B cell (primary cell): ENCODE measurements at regions of chr15 and their contacts with region 1.

Region 1: DNA sequence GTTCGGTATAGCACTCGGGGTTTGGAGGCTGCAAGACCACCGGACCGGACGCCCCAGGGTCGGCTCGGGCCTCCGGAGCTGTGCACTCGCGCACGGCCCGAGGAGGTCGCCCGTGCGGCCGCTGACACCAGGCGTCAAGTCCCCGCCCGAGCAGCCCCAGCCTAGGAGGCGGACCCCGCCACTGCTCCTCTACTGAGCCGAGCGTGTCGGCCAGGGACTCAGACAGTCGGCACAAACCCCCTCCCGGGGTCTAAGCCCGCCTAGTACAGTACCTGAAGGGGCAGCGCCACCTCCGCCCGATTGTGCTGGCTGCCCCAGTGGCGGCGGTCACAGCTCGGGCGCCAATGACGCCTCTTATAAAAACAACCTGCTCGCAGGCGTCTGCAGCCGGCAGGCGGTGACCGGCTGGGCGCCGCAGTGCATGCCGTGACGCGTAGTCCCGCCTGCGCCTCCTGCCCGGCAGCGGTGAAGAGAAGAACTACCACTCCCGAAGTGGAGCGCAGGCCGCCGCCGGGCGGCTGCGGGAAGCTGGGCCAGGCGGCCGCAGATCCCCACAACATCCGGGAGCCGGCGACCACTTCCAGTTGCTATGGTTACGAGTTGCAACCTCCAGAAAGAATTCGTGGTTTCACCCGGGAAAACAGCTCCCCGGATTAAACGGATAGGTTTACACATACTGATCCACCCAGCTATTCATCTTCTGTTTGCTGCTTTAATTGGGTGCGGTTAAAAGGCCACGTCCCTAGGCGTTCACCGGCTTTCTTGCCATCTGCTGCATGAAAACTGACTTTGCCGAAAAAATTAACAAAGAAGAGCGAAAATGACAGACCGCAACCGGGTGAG is at the starts of genes CCPG1 and PIERCE2:
- DNase-seq: peak; percentile 93
- ATAC-seq: peak; percentile 94
- H3K4me3 ChIP-seq: peak within 1 kb of the TSS; percentile 73 to 90 (median 77)
- H3K4me3 Mint-ChIP-seq: peak within 1 kb of the TSS; percentile 96
- H3K27ac ChIP-seq: peak within 1 kb of the TSS; percentile 90 to 94
- H3K27ac Mint-ChIP-seq: peak within 1 kb of the TSS; percentile 92
- H3K4me1 ChIP-seq: peaks cover 19 to 24% of the 10 kb centered on the region in 2 donors
- H3K4me1 Mint-ChIP-seq: peaks cover 27% of the 10 kb centered on the region
- H3K27me3 ChIP-seq: no peaks in the 10 kb centered on the region
- H3K27me3 Mint-ChIP-seq: no peaks in the 10 kb centered on the region
- CTCF ChIP-seq: peak; percentile 92
- total RNA-seq, gene CCPG1: 32.1 and 36.0 TPM in 2 replicates
- total RNA-seq, gene PIERCE2: 1.2 and 1.8 TPM in 2 replicates

Region 2: DNA sequence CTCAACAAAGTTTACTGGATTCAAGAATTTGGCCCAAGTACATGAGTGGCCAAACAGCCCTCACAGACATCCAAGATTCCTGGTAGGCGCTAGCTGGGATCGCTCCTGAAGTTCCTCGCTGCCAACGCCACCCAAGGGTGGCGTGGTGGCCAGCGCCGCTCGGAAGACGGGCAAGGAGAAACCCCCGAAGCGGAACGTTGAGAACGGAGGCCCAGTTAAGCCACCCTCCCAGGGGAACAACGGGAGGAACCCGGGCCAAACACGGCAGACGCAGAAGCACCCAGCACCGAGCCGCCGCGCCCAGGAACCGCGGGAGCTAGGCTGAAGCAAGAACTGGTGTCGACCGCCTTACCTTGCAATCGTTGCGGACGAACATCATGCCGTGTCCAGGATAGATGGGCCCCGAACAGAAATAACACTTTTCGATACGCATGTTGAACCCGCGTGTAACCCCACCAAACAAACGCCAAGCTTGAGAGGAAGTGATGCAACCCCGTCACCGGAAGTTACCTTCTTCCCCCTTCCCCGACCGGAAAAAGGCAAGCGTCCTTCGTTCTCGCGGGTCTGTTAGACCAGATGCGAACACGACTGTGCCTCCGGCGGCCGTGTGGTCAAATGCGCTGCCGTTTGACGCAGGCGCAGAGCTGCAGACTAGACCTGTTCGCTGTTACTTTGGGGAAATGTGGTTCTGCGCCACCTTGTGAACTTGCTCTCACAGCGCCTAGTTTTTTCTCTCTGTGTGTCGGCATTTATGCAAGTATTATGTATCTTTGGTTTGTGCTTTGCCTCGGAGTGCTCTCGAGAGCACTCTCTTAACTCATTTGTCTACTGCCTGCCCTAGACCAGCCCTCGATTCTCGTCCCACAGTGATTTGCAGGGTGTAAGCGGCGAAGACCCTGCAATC is 211.5 kb before region 1 on chr15 and contains the start of gene RSL24D1:
- CTCF ChIA-PET with region 1: interaction called, 13 read pairs
- POLR2A ChIA-PET with region 1: interaction called, 8 read pairs
- intact Hi-C with region 1: loop called (anchors 1 kb)
- DNase-seq: peak; percentile 98
- ATAC-seq: peak; percentile 95
- H3K4me3 ChIP-seq: peak within 1 kb of the TSS; percentile 78 to 97 (median 90)
- H3K4me3 Mint-ChIP-seq: no peak within 1 kb of the TSS
- H3K27ac ChIP-seq: peak within 1 kb of the TSS; percentile 92
- H3K27ac Mint-ChIP-seq: no peak within 1 kb of the TSS
- H3K4me1 ChIP-seq: peaks cover 29 to 30% of the 10 kb centered on the region in 2 donors
- H3K4me1 Mint-ChIP-seq: peaks cover 9% of the 10 kb centered on the region
- H3K27me3 ChIP-seq: no peaks in the 10 kb centered on the region
- H3K27me3 Mint-ChIP-seq: no peaks in the 10 kb centered on the region
- CTCF ChIP-seq: peak; percentile 67
- total RNA-seq, gene RSL24D1: 69.0 and 80.7 TPM in 2 replicates

Region 3: GRCh38 chr15:55318588-55319494 is 89.3 kb before region 1 on chr15 and contains the starts of genes PIGB and PIGBOS1:
- CTCF ChIA-PET with region 1: interaction called, 14 read pairs
- POLR2A ChIA-PET with region 1: interaction called, 12 read pairs
- intact Hi-C with region 1: loop called (anchors 1 kb)
- DNase-seq: peak; percentile 96
- ATAC-seq: peak; percentile 84
- H3K4me3 ChIP-seq: peak within 1 kb of the TSS; percentile 81 to 96 (median 89)
- H3K4me3 Mint-ChIP-seq: peak within 1 kb of the TSS; percentile 100
- H3K27ac ChIP-seq: peak within 1 kb of the TSS; percentile 96 to 98
- H3K27ac Mint-ChIP-seq: peak within 1 kb of the TSS; percentile 100
- H3K4me1 ChIP-seq: peaks cover 28 to 40% of the 10 kb centered on the region in 2 donors
- H3K4me1 Mint-ChIP-seq: peaks cover 62% of the 10 kb centered on the region
- H3K27me3 ChIP-seq: no peaks in the 10 kb centered on the region
- H3K27me3 Mint-ChIP-seq: no peaks in the 10 kb centered on the region
- CTCF ChIP-seq: no peak
- total RNA-seq, gene PIGB: 39.2 and 41.7 TPM in 2 replicates
- total RNA-seq, gene PIGBOS1: 14.6 and 16.4 TPM in 2 replicates

Region 4: DNA sequence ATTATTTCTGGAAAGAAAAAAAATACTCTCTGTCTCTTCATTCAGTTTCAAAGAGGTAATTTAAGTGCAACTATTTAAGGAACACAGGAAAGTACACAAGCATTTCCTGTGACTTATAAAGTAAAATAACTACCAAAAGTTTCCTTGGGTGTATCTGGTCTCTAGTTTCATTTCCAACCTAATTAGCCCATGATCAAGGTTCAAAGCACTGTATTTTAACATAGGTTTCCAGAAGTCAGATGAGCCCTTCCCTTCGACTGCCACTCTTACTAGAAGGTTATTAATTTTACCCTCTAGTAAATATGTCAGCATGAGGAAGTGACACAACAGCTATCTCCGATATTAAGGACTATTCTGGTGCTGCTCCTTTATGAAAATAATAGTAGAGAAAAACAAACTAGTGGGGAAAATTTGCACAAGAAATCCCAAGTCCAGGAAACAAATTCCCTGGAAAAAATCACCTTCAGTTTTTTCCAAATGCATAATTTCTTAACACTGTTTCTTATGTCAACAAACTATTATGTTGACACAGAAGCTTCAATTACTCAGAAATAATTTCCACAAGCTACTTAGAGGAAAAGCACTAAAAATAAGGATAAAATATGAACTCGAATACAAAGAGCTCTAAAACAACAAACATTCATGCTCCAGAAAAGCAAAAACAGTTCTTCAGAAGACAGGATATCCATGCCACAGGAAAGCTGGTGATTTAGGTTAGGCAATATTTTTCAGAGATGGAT is 35.3 kb before region 1 on chr15:
- CTCF ChIA-PET with region 1: interaction called, 5 read pairs
- POLR2A ChIA-PET with region 1: no interaction called
- intact Hi-C with region 1: loop called (anchors 5 kb)
- DNase-seq: no peak
- ATAC-seq: no peak
- H3K4me3 ChIP-seq: no peak overlapping the region
- H3K4me3 Mint-ChIP-seq: no peak overlapping the region
- H3K27ac ChIP-seq: peak overlapping the region in 1 of 2 donors; percentile 48
- H3K27ac Mint-ChIP-seq: peak overlapping the region; percentile 64
- H3K4me1 ChIP-seq: peaks cover 3 to 8% of the 10 kb centered on the region in 2 donors
- H3K4me1 Mint-ChIP-seq: peaks cover 10% of the 10 kb centered on the region
- H3K27me3 ChIP-seq: no peaks in the 10 kb centered on the region
- H3K27me3 Mint-ChIP-seq: no peaks in the 10 kb centered on the region
- CTCF ChIP-seq: no peak

Region 5: DNA sequence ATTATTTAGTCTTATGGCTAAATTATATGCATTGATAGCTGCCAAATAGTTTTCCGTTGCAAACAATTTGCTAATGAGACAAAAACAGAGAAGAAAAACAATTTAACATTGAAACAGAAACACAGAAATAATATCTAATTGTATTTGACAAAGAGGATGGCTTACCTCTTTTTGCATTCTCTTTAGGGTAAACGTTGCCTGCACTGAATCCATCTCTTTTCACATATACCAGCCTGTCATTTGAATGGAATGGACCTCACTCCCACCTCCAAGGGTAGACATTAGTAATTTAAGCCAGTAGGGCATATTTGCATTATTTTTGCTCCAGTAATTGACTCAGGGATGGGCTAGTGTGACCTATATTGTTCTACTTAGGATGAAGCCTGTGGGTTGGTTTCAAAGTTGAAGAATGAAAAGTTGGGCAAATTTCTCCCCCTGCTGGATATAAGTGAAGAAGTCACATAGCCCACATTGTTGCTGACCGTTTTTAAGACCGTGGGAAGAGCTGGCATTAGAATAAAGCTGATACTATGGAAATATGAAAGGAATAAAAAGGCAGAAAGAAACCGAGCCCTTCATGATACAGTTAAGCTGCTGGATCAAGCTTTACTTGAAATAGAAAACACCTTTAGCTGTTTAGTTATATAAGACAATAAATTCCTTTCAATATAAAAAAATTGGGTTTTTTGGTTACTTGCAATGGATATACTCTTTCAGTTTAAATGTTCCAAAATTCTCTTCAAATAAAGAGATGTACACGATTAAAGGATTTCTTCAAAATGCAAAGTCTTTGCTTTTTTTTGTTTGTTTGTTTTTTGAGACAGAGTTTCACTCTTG is 27.0 kb after region 1 on chr15:
- CTCF ChIA-PET with region 1: interaction called, 14 read pairs
- POLR2A ChIA-PET with region 1: no interaction called
- intact Hi-C with region 1: loop called (anchors 1 kb)
- DNase-seq: peak; percentile 57
- ATAC-seq: peak; percentile 33
- H3K4me3 ChIP-seq: no peak overlapping the region
- H3K4me3 Mint-ChIP-seq: no peak overlapping the region
- H3K27ac ChIP-seq: no peak overlapping the region
- H3K27ac Mint-ChIP-seq: no peak overlapping the region
- H3K4me1 ChIP-seq: no peaks in the 10 kb centered on the region
- H3K4me1 Mint-ChIP-seq: no peaks in the 10 kb centered on the region
- H3K27me3 ChIP-seq: no peaks in the 10 kb centered on the region
- H3K27me3 Mint-ChIP-seq: no peaks in the 10 kb centered on the region
- CTCF ChIP-seq: peak; percentile 69